ENCODE measurements at regions of chr2 and their contacts with region 1.

Region 1: DNA sequence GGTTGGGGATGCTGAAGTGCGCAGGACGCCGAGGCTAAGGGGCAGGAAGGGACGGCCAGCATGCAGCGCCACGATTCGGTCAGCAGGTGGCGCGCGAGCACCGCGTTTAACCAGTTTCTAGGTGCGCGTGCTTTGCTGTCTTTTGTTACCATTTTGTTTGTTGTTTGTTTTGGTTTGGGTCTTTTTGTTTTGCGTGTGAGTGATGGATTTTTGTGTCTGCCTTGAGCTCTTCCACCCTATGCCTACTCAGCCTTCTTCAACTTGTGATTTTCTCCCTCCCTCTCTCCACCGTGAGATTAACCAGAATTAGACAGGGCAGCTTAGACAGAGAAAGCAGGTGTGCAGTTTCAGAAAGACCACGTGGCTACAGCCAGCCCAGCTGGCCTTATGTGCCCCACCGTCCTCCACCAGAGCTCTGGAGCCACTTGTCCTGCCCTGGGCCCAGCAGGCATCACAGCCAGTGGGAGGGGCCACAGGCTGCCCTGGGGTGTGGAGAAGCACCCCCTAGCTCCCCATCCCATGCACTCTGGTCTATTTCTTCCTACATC is 180.2 kb downstream of the RNF144A start:
- DNase-seq: peak; percentile 73
- H3K4me3 Mint-ChIP-seq: peak overlapping the region; percentile 5
- H3K27ac Mint-ChIP-seq: no peak overlapping the region
- H3K4me1 Mint-ChIP-seq: peaks cover 6% of the 10 kb centered on the region
- H3K27me3 Mint-ChIP-seq: no peaks in the 10 kb centered on the region

Region 2: GRCh38 chr2:7109533-7109885 is 12.1 kb after region 1 on chr2:
- CTCF ChIA-PET with region 1: interaction called, 13 read pairs
- POLR2A ChIA-PET with region 1: no interaction called
- DNase-seq: no peak
- H3K4me3 Mint-ChIP-seq: no peak overlapping the region
- H3K27ac Mint-ChIP-seq: no peak overlapping the region
- H3K4me1 Mint-ChIP-seq: no peaks in the 10 kb centered on the region
- H3K27me3 Mint-ChIP-seq: no peaks in the 10 kb centered on the region

Measured in activated CD4-positive, alpha-beta T cell treated with anti-CD3 and anti-CD28 coated beads, Interleukin-2, amount 10 ng/mL, durations not matched to agents 7 days and 5 days (primary cell).